GM12878 (cell line): ENCODE measurements at regions of chr17 and their contacts with region 1.

Region 1: DNA sequence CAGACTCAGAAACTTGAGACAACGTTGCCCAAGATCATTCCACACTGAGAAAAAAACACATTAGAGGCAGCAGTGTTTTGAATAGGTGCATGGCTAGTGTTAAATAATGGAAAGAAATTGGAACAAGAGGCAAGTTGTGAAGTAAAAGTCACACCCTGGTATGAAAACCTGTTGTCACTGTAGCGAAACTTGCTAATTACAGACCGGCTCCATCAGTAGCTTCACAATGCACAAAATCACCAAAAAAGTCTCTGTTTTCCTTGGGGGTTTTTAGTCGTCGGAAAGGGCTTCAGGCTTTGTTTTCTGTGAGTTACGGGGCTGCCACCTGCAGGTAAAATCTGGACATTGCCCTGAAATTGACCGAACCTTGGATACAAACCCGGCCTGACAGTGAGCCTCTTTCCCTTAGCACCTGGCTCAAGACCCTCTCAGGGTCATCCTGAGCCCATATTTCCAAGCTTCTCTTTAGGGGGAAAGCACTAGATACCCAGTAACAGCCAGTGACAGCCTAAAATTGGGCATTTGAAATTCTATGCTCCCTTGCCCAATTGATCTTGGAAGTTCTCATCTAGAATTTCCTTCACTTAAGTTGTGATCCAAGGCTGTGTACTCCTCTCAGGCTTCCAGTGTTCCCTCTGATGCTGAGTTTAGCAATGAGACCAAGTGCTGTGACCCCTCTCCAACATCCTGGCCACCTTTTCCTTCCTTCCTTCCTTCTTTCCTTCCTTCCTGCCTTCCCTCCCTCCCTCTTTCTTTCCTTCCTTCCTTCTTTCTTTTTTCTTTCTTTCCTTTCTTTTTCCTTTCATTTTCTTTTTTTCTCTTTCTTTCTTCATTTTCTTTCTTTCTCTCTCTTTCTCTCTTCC is 7.2 kb upstream of the GRB2 start:
- DNase-seq: no peak
- ATAC-seq: peak; percentile 93
- H3K4me3 ChIP-seq: no peak overlapping the region
- H3K27ac ChIP-seq: peak overlapping the region; percentile 20
- H3K4me1 ChIP-seq: peaks cover 15% of the 10 kb centered on the region
- H3K27me3 ChIP-seq: no peaks in the 10 kb centered on the region
- CTCF ChIP-seq: peak; percentile 73 to 89 (median 85)
- EP300 ChIP-seq: no peak
- POLR2A ChIP-seq: no peak
- RAD21 ChIP-seq: peak; percentile 94

Region 2: GRCh38 chr17:74833501-74834377 is 578.9 kb before region 1 on chr17:
- CTCF ChIA-PET with region 1: no interaction called
- POLR2A ChIA-PET with region 1: no interaction called
- RAD21 ChIA-PET with region 1: no interaction called
- SMC1A ChIA-PET with region 1: no interaction called
- in situ Hi-C with region 1: no loop called
- intact Hi-C with region 1: no loop called
- DNase-seq: no peak
- ATAC-seq: peak; percentile 94
- H3K4me3 ChIP-seq: no peak overlapping the region
- H3K27ac ChIP-seq: no peak overlapping the region
- H3K4me1 ChIP-seq: peaks cover 12% of the 10 kb centered on the region; the same call in 1 of the 2 replicates
- H3K27me3 ChIP-seq: no peaks in the 10 kb centered on the region
- CTCF ChIP-seq: no peak
- EP300 ChIP-seq: no peak
- POLR2A ChIP-seq: no peak
- RAD21 ChIP-seq: no peak

Region 3: GRCh38 chr17:74972107-74972972 is 440.3 kb before region 1 on chr17 and contains the start of gene HID1:
- CTCF ChIA-PET with region 1: no interaction called
- POLR2A ChIA-PET with region 1: no interaction called
- RAD21 ChIA-PET with region 1: no interaction called
- SMC1A ChIA-PET with region 1: no interaction called
- in situ Hi-C with region 1: loop called (anchors 5 kb)
- intact Hi-C with region 1: loop called (anchors 10 kb)
- DNase-seq: no peak
- ATAC-seq: peak; percentile 90
- H3K4me3 ChIP-seq: 0 out of 2 replicates have a peak within 1 kb of the TSS, but pooled peaks have one; percentile 55
- H3K27ac ChIP-seq: no peak within 1 kb of the TSS
- H3K4me1 ChIP-seq: no peaks in the 10 kb centered on the region
- H3K27me3 ChIP-seq: peaks cover 7 to 11% of the 10 kb centered on the region in 2 experiments; a peak in 3 of 4 replicates
- CTCF ChIP-seq: no peak
- EP300 ChIP-seq: no peak
- POLR2A ChIP-seq: no peak; the same call in 1 of the 2 replicates
- RAD21 ChIP-seq: no peak
- polyA plus RNA-seq, gene HID1: not detected

Region 4: DNA sequence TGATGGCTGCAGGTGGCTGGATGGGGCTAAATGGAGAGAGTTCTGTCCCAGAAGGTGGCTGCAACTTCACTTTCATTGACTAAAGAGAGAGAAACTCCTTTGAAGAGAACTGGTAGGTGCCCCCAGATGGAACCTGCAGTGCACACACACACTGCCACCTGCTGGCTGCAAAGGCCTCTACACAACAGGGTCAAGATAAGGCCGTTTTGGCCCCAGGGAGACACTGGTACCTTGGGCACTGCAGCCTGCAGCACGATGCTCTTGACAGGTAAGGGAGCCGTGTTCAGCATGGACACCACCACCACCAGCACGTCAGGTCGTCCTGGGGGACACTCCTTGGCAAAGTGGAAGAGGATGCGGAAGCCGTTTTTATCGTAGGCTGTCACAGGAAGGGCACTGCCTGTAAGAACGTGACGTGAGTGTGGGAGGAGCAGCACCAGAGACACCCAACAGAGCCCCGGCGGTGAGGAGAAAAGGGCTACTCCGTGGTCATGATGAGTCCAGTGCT is 173.9 kb before region 1 on chr17:
- CTCF ChIA-PET with region 1: interaction called, 13 read pairs
- POLR2A ChIA-PET with region 1: no interaction called
- RAD21 ChIA-PET with region 1: no interaction called
- SMC1A ChIA-PET with region 1: no interaction called
- in situ Hi-C with region 1: no loop called
- intact Hi-C with region 1: loop called (anchors 1 kb)
- DNase-seq: no peak
- ATAC-seq: peak; percentile 96
- H3K4me3 ChIP-seq: no peak overlapping the region
- H3K27ac ChIP-seq: no peak overlapping the region
- H3K4me1 ChIP-seq: peaks cover 28% of the 10 kb centered on the region
- H3K27me3 ChIP-seq: no peaks in the 10 kb centered on the region
- CTCF ChIP-seq: peak; percentile 83 to 94 (median 89)
- EP300 ChIP-seq: no peak
- POLR2A ChIP-seq: peak; percentile 71
- RAD21 ChIP-seq: peak; percentile 67

Region 5: DNA sequence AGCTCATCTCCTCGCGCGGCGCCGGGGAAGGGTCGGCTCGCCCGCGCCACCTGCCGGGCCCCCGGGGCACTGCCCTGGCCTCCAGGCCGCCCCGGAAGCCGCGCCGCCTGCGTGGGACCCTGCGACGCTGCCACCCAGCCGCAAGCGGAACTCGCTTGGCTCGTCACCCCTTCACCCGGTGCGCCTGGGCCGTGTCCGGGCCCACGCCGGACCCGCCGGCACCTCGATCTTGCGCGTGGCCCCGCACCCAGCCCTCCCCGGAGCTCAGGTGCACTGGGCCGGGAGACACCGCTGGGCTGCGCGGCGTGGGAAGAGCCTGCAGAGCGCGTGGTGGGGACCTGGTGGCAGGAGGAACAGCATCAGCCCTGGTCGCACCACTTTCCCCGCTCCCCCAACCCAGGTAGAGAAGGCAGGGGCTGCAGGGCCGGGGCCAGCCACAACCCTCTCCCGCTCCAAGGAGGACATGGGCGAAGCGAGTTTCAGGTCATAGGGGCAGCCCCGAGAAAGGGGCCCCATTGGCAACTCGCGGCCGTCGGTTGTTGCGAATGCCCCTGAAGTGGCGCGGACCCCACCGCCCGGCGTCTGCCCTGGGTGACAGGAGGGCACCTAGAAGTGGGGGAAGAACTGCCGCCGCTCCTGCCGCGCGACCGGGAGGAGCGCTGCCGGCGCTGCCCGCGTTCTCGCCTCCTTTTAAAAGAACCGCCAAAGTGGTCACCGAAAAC is 141.3 kb before region 1 on chr17:
- CTCF ChIA-PET with region 1: interaction called, 17 read pairs
- POLR2A ChIA-PET with region 1: interaction called, 3 read pairs
- RAD21 ChIA-PET with region 1: interaction called, 22 read pairs
- SMC1A ChIA-PET with region 1: interaction called, 15 read pairs
- in situ Hi-C with region 1: loop called (anchors 5 kb)
- intact Hi-C with region 1: loop called (anchors 2 kb)
- DNase-seq: no peak
- ATAC-seq: peak; percentile 82
- H3K4me3 ChIP-seq: peak overlapping the region; percentile 70
- H3K27ac ChIP-seq: peak overlapping the region; percentile 91
- H3K4me1 ChIP-seq: peaks cover 24% of the 10 kb centered on the region
- H3K27me3 ChIP-seq: no peaks in the 10 kb centered on the region
- CTCF ChIP-seq: peak; percentile 66 to 87 (median 79); a peak in 4 of 6 replicates
- EP300 ChIP-seq: no peak
- POLR2A ChIP-seq: peak; percentile 79
- RAD21 ChIP-seq: peak; percentile 40; the same call in 1 of the 2 replicates

Region 6: GRCh38 chr17:75393523-75394331 is 19.0 kb before region 1 on chr17:
- CTCF ChIA-PET with region 1: interaction called, 10 read pairs
- POLR2A ChIA-PET with region 1: interaction called, 3 read pairs
- RAD21 ChIA-PET with region 1: interaction called, 12 read pairs
- SMC1A ChIA-PET with region 1: interaction called, 7 read pairs
- in situ Hi-C with region 1: no loop called
- intact Hi-C with region 1: no loop called
- DNase-seq: peak; percentile 79
- ATAC-seq: peak; percentile 95
- H3K4me3 ChIP-seq: peak overlapping the region; percentile 77
- H3K27ac ChIP-seq: peak overlapping the region; percentile 57
- H3K4me1 ChIP-seq: peaks cover 21% of the 10 kb centered on the region
- H3K27me3 ChIP-seq: no peaks in the 10 kb centered on the region
- CTCF ChIP-seq: 0 out of 6 replicates have a peak, but pooled peaks of 1 of the 3 experiments have one; percentile 3
- EP300 ChIP-seq: no peak
- POLR2A ChIP-seq: peak; percentile 51; the same call in 1 of the 2 replicates
- RAD21 ChIP-seq: no peak